ENCODE measurements at regions of chr22 and their contacts with region 1.

Region 1: GRCh38 chr22:23893943-23894709 is at the start of gene MIF:
- DNase-seq: peak; percentile 91 to 98 (median 95)
- H3K4me3 ChIP-seq: peak within 1 kb of the TSS; percentile 57 to 69
- H3K4me3 Mint-ChIP-seq: peak within 1 kb of the TSS; percentile 91 to 97 (median 95)
- H3K27ac ChIP-seq: peak within 1 kb of the TSS; percentile 77
- H3K27ac Mint-ChIP-seq: peak within 1 kb of the TSS; percentile 91 to 99 (median 98)
- H3K4me1 ChIP-seq: peaks cover 22% of the 10 kb centered on the region
- H3K4me1 Mint-ChIP-seq: peaks cover 13 to 32% (median 23%) of the 10 kb centered on the region in 4 donors
- H3K27me3 ChIP-seq: no peaks in the 10 kb centered on the region
- H3K27me3 Mint-ChIP-seq: no peaks in the 10 kb centered on the region
- total RNA-seq, gene MIF: 208 to 217 TPM

Region 2: GRCh38 chr22:23204541-23205157 is 689.5 kb before region 1 on chr22:
- CTCF ChIA-PET with region 1: no interaction called
- POLR2A ChIA-PET with region 1: no interaction called
- intact Hi-C with region 1: no loop called
- DNase-seq: no peak
- H3K4me3 ChIP-seq: no peak overlapping the region
- H3K4me3 Mint-ChIP-seq: no peak overlapping the region
- H3K27ac ChIP-seq: no peak overlapping the region
- H3K27ac Mint-ChIP-seq: peak overlapping the region in 2 of 7 donors; percentile 47 to 48
- H3K4me1 ChIP-seq: no peaks in the 10 kb centered on the region
- H3K4me1 Mint-ChIP-seq: peaks cover 18 to 58% (median 34%) of the 10 kb centered on the region in 4 donors
- H3K27me3 ChIP-seq: no peaks in the 10 kb centered on the region
- H3K27me3 Mint-ChIP-seq: no peaks in the 10 kb centered on the region

Region 3: DNA sequence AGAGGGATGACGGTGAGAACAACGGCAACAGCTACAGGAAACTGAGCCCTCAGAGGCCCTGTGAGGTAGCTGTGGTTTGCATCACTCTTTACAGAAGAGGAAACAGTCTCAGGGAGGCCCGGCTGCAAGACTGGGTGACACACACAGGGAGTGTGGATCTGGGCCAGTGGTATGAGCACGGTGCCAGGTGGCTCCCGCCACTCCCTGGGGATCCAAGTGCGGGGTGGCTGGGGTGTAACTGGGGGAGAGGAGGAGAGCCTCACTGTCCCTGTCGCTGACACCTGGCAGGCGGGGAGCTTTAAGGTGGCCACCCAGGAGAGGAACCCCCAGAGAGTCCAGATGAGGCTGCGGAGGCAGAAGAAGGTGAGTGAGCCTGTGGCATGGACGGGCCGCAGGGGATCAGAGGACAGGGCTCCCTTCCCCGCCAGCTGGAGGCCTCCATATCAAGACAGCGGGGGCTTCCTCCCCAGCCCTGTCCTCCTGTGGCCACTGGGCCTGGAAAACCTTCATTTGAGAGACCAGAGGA is 197.7 kb before region 1 on chr22:
- CTCF ChIA-PET with region 1: interaction called, 3 read pairs
- POLR2A ChIA-PET with region 1: interaction called, 12 read pairs
- intact Hi-C with region 1: no loop called
- DNase-seq: peak; percentile 82 to 90 (median 86)
- H3K4me3 ChIP-seq: peak overlapping the region; percentile 58 to 93
- H3K4me3 Mint-ChIP-seq: peak overlapping the region; percentile 92 to 99 (median 97)
- H3K27ac ChIP-seq: peak overlapping the region; percentile 82
- H3K27ac Mint-ChIP-seq: peak overlapping the region; percentile 98 to 100 (median 100)
- H3K4me1 ChIP-seq: peaks cover 43% of the 10 kb centered on the region
- H3K4me1 Mint-ChIP-seq: peaks cover 27 to 61% (median 44%) of the 10 kb centered on the region in 4 donors
- H3K27me3 ChIP-seq: no peaks in the 10 kb centered on the region
- H3K27me3 Mint-ChIP-seq: no peaks in the 10 kb centered on the region

Region 4: DNA sequence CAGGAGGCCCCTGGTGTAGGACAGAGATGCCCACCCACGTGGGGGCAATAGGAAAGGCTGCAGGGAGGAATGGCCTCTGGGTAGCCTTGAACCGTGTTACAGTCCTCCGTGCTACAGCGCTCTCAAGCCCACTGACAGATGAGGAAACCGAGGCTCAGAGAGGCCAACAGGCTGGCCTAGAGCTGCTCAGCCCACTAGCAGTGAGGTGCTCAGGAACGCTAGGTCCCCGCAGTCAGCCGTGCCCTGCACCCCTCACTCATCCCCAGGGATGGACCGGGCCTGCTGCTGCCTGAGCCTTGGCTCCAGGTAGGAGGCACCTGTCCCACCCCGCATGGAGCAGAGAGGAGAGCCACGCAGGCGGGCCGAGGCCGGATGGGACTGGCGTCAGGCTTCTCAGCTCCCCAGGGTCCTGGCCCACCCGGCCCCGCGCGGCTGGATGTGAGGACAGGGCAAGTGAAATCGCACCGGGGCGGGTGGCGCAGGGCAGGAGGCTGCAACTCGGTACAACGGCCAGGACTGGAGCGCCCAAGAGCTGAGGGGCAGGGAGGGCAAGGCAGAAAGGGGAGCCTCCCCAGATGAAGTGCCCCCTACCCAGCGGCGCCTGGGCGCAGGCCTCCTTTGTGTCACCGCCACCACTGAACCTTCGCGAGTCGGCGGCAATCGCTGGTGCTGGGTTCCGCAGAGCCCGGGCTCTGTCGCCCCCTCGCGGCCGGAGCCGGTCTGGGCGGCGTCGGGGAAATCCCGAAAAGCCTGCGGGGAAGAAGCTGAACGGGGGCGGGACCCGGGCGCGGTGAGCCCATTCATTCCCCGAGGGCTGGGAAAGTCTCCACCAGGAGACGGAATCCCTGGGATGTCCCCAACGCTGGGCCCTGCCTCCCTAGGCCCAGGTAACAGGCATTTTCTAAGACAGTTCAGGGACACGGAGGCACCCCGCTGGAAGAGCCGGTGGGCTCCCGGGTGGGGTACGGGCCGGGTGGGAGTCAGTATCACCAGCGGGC is 44.8 kb before region 1 on chr22:
- CTCF ChIA-PET with region 1: interaction called, 15 read pairs
- POLR2A ChIA-PET with region 1: interaction called, 3 read pairs
- intact Hi-C with region 1: no loop called
- DNase-seq: peak; percentile 79 to 86 (median 80)
- H3K4me3 ChIP-seq: no peak overlapping the region
- H3K4me3 Mint-ChIP-seq: no peak overlapping the region
- H3K27ac ChIP-seq: no peak overlapping the region
- H3K27ac Mint-ChIP-seq: peak overlapping the region in 1 of 7 donors; percentile 7
- H3K4me1 ChIP-seq: peaks cover 7% of the 10 kb centered on the region
- H3K4me1 Mint-ChIP-seq: peaks cover 0 to 4% (median 2%) of the 10 kb centered on the region in 4 donors
- H3K27me3 ChIP-seq: no peaks in the 10 kb centered on the region
- H3K27me3 Mint-ChIP-seq: no peaks in the 10 kb centered on the region

Region 5: DNA sequence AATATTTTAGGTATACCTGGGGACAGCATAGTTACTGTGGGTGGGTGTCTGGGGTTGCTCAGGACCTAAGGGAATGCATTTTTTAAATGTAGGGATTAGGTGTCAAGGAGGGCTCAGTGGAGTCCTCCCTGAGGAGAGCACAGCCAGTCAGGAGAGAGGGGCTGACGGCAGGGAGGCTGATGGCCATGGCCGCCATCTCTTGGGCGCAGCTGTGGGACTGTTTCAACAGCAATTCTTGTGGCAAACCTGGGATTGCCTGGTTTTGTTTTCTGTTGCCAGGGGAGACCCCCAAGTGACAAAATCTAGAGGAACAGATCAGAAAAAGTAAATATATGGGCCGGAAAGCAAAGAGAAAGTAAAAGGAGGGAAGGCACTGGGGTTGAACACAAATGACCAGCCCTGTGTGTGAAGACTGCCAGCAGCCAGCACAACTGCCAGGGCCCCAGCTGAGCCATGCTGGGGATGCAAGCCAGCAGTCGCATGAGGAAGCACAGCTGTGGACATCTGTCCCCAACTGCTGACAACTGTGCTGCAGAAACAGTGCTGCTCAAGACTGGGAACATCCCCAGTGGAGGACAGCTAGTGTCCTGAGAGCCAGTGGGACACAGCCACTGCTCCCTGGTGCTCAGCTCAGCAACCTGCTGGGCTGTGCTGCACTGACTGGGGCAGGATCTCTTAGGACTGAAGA is 10.6 kb after region 1 on chr22:
- CTCF ChIA-PET with region 1: interaction called, 56 read pairs
- POLR2A ChIA-PET with region 1: interaction called, 29 read pairs
- intact Hi-C with region 1: no loop called
- DNase-seq: no peak
- H3K4me3 ChIP-seq: no peak overlapping the region
- H3K4me3 Mint-ChIP-seq: no peak overlapping the region
- H3K27ac ChIP-seq: no peak overlapping the region
- H3K27ac Mint-ChIP-seq: peak overlapping the region in 1 of 7 donors; percentile 54
- H3K4me1 ChIP-seq: no peaks in the 10 kb centered on the region
- H3K4me1 Mint-ChIP-seq: peaks cover 0 to 3% (median 0%) of the 10 kb centered on the region in 4 donors
- H3K27me3 ChIP-seq: no peaks in the 10 kb centered on the region
- H3K27me3 Mint-ChIP-seq: peaks cover 0 to 1% of the 10 kb centered on the region in 2 donors

Region 6: DNA sequence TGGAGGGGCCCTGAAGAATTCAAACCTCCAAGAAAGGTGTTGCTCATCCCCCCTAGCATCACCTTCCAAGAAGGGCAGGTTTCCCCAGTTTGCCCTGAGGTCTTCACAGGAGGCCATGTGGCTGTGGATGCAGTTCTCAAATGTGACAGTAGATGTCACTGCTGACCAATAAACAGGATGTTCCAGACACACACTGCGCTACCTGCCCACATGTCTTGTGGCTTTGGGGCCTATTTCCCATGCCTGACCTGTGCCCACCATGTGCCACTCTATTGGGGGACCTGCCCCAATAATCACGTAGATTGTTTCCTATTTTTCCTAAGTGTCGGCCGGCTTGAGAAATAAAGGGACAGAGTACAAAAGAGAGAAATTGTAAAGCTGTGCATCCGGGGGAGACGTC is 90.3 kb after region 1 on chr22:
- CTCF ChIA-PET with region 1: no interaction called
- POLR2A ChIA-PET with region 1: no interaction called
- intact Hi-C with region 1: no loop called
- DNase-seq: peak in 4 of 5 donors; percentile 27 to 66 (median 46)
- H3K4me3 ChIP-seq: no peak overlapping the region
- H3K4me3 Mint-ChIP-seq: no peak overlapping the region
- H3K27ac ChIP-seq: no peak overlapping the region
- H3K27ac Mint-ChIP-seq: no peak overlapping the region
- H3K4me1 ChIP-seq: no peaks in the 10 kb centered on the region
- H3K4me1 Mint-ChIP-seq: peaks cover 0 to 4% (median under 1%) of the 10 kb centered on the region in 4 donors
- H3K27me3 ChIP-seq: no peaks in the 10 kb centered on the region
- H3K27me3 Mint-ChIP-seq: peaks cover 0 to 1% of the 10 kb centered on the region in 2 donors

Region 7: DNA sequence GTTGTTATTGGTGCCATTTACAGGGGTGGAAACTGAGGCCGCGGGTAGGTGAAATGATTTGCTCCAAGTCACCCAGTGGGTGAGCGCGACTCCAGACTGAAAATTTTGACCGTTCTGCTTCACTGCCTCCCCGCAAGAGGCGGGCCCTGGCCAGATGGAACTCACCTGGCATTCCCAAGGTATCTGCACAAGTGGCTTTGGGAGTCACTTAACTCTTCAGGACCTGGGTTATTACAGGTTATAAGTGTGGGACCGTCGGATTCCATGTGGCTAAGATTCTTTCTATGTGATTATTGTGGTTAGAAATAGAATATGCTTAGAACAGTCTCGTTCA is 117.6 kb after region 1 on chr22:
- CTCF ChIA-PET with region 1: no interaction called
- POLR2A ChIA-PET with region 1: interaction called, 15 read pairs
- intact Hi-C with region 1: no loop called
- DNase-seq: peak in 1 of 5 donors; percentile 6
- H3K4me3 ChIP-seq: peak overlapping the region; percentile 68 to 86
- H3K4me3 Mint-ChIP-seq: peak overlapping the region; percentile 94 to 98 (median 98)
- H3K27ac ChIP-seq: peak overlapping the region; percentile 78
- H3K27ac Mint-ChIP-seq: peak overlapping the region; percentile 94 to 99 (median 97)
- H3K4me1 ChIP-seq: peaks cover 23% of the 10 kb centered on the region
- H3K4me1 Mint-ChIP-seq: peaks cover 26 to 57% (median 35%) of the 10 kb centered on the region in 4 donors
- H3K27me3 ChIP-seq: no peaks in the 10 kb centered on the region
- H3K27me3 Mint-ChIP-seq: peaks cover 0 to 5% of the 10 kb centered on the region in 2 donors

Region 8: GRCh38 chr22:24555157-24556039 is 661.3 kb after region 1 on chr22 and contains the start of gene SNRPD3:
- CTCF ChIA-PET with region 1: no interaction called
- POLR2A ChIA-PET with region 1: interaction called, 9 read pairs
- intact Hi-C with region 1: loop called (anchors 10 kb)
- DNase-seq: peak; percentile 96 to 100 (median 98)
- H3K4me3 ChIP-seq: peak within 1 kb of the TSS; percentile 76 to 100
- H3K4me3 Mint-ChIP-seq: peak within 1 kb of the TSS; percentile 97 to 99 (median 98)
- H3K27ac ChIP-seq: peak within 1 kb of the TSS; percentile 87
- H3K27ac Mint-ChIP-seq: peak within 1 kb of the TSS; percentile 95 to 99 (median 99)
- H3K4me1 ChIP-seq: peaks cover 52% of the 10 kb centered on the region
- H3K4me1 Mint-ChIP-seq: peaks cover 48 to 72% (median 59%) of the 10 kb centered on the region in 4 donors
- H3K27me3 ChIP-seq: no peaks in the 10 kb centered on the region
- H3K27me3 Mint-ChIP-seq: no peaks in the 10 kb centered on the region
- total RNA-seq, gene SNRPD3: 77.6 to 85.0 TPM